ENCODE measurements at regions of chr10 and their contacts with region 1.

Region 1: GRCh38 chr10:93293999-93294398 is 188.1 kb downstream of the MYOF start:
- DNase-seq: no peak
- H3K4me3 ChIP-seq: no peak overlapping the region
- H3K27ac ChIP-seq: no peak overlapping the region
- H3K4me1 ChIP-seq: peaks cover 0 to 9% of the 10 kb centered on the region in 2 donors
- H3K27me3 ChIP-seq: no peaks in the 10 kb centered on the region
- CTCF ChIP-seq: no peak
- POLR2A ChIP-seq: no peak

Region 2: DNA sequence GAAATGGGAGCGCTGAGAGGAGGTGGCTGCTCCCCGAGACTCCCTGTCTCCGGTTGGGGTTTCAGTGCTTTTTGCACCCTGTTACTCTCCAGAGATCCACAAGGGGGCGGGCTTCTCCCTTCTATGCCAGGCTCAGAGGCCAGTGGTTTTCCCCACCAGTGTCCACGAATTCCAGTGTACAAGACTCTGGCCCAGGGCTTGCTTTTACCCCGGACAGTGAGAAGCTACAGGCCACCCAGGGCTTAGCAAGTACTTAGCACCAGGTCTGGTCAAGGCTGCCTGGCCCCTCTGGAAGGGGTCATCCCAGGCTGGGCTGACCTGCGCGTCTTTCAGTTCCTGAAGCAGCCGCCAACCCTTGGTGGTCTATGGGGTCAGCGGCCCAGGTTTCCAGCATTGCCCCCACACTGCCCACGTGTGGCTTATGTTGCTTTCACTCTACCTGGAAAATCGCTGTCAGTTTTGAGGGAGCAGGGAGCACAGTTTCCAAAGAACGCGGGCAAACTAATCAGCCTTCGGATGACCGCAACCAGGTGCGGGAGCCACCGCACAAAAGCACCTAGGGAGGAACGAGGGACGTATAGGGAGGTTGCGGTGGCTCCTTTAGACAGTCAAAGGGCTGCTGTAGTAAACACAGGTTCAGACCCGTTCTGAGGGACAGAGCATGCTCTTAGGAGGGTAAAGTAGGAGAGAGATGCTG is 213.5 kb before region 1 on chr10:
- intact Hi-C with region 1: loop called (anchors 10 kb)
- DNase-seq: peak; percentile 47 to 59
- H3K4me3 ChIP-seq: no peak overlapping the region
- H3K27ac ChIP-seq: no peak overlapping the region
- H3K4me1 ChIP-seq: no peaks in the 10 kb centered on the region
- H3K27me3 ChIP-seq: peaks cover 2% of the 10 kb centered on the region
- CTCF ChIP-seq: peak; percentile 63 to 86 (median 70)
- POLR2A ChIP-seq: no peak